Mammary epithelial cell (primary cell): ENCODE measurements at regions of chr10 and their contacts with region 1.

Region 1: GRCh38 chr10:79038841-79039201 is 29.9 kb upstream of the ZMIZ1 start:
- DNase-seq: no peak
- H3K4me3 ChIP-seq: no peak overlapping the region
- H3K27ac ChIP-seq: no peak overlapping the region
- H3K4me1 ChIP-seq: no peaks in the 10 kb centered on the region
- H3K27me3 ChIP-seq: no peaks in the 10 kb centered on the region
- CTCF ChIP-seq: no peak

Region 2: DNA sequence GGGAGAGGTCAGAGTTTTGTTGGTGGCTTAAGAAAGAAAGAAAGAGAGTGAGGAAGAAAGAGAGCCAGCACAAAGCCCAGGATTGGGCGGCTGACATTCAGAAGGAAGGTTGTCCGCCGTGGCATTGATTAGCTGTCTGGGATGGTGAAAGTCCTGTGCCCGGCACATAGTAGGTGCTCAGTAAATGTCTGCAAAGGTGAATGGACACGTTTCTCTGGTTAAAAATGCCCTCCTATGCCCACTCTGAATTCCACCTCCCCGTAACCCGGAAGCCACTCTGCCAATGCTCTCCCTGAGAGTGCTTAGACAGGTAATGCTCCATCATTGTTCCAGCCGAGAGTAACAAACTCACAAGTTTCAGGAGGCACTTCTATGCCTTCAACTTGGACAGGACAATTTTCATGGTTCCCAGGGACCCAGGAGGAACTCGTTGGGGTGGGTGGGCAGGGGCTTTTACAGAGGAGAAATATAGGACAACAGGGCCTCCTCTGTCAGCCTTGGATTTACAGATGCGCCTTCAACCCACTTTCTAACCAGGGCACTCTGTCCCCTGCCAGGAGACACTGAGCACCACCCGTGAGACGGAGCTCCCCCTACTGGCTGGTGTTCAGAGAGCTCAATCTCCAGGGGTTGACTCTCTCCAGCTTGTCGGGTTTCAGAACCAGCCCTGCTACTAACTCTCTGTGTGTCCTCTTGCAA is 381.5 kb before region 1 on chr10:
- CTCF ChIA-PET with region 1: no interaction called
- dilution Hi-C with region 1: loop called (anchors 10 kb)
- in situ Hi-C with region 1: no loop called
- intact Hi-C with region 1: no loop called
- DNase-seq: peak; percentile 37
- H3K4me3 ChIP-seq: no peak overlapping the region
- H3K27ac ChIP-seq: no peak overlapping the region
- H3K4me1 ChIP-seq: no peaks in the 10 kb centered on the region
- H3K27me3 ChIP-seq: no peaks in the 10 kb centered on the region
- CTCF ChIP-seq: peak; percentile 78 to 95

Region 3: GRCh38 chr10:78727728-78728127 is 311.1 kb before region 1 on chr10:
- CTCF ChIA-PET with region 1: no interaction called
- dilution Hi-C with region 1: loop called (anchors 5 kb)
- in situ Hi-C with region 1: no loop called
- intact Hi-C with region 1: no loop called
- DNase-seq: no peak
- H3K4me3 ChIP-seq: no peak overlapping the region
- H3K27ac ChIP-seq: no peak overlapping the region
- H3K4me1 ChIP-seq: no peaks in the 10 kb centered on the region
- H3K27me3 ChIP-seq: no peaks in the 10 kb centered on the region
- CTCF ChIP-seq: no peak

Region 4: GRCh38 chr10:78964952-78965633 is 73.7 kb before region 1 on chr10:
- CTCF ChIA-PET with region 1: no interaction called
- dilution Hi-C with region 1: loop called (anchors 5 kb)
- in situ Hi-C with region 1: no loop called
- intact Hi-C with region 1: no loop called
- DNase-seq: peak; percentile 79
- H3K4me3 ChIP-seq: no peak overlapping the region
- H3K27ac ChIP-seq: no peak overlapping the region
- H3K4me1 ChIP-seq: peaks cover 43% of the 10 kb centered on the region
- H3K27me3 ChIP-seq: no peaks in the 10 kb centered on the region
- CTCF ChIP-seq: no peak